ENCODE measurements at regions of chr10 and their contacts with region 1.

Region 1: DNA sequence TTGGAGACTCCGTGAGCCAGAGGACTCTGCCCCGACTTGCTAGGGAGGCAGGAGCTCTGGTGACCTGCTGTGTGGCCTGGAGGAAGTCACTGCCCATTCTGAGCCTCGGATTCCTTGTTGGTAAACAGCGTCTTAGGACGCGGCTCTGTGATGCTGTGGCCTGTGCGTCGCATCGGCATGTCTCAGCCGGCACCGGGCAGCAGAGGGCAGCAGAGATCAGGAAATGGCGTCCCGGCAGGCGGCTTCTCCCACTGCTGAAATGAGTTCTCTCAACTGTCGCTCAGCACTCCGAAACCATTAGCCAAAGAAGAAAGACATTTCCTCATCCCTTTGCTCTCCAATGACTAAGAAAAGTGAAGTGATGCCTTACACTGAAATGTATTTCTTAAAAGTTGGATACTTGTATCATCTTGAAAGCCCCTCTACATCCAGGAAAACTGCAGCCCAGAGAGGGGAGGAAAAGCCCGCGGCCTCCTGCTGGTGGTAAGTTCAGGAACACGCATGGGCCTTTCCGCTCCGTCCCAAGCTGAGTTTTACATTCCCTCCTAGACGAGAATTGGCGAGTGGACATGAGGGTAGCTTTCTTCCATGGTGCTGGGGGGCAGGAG is 91.7 kb downstream of the WDR11 start:
- DNase-seq: no peak
- H3K4me3 ChIP-seq: peak overlapping the region in 1 of 4 donors; percentile 15
- H3K27ac ChIP-seq: peak overlapping the region in 1 of 4 donors; percentile 35
- H3K4me1 ChIP-seq: peaks cover 2 to 26% (median 23%) of the 10 kb centered on the region in 4 donors
- H3K27me3 ChIP-seq: peaks cover 0 to 6% (median 0%) of the 10 kb centered on the region in 4 donors
- CTCF ChIP-seq: peak; percentile 85 to 90 (median 90)
- EP300 ChIP-seq: no peak
- POLR2A ChIP-seq: no peak

Region 2: DNA sequence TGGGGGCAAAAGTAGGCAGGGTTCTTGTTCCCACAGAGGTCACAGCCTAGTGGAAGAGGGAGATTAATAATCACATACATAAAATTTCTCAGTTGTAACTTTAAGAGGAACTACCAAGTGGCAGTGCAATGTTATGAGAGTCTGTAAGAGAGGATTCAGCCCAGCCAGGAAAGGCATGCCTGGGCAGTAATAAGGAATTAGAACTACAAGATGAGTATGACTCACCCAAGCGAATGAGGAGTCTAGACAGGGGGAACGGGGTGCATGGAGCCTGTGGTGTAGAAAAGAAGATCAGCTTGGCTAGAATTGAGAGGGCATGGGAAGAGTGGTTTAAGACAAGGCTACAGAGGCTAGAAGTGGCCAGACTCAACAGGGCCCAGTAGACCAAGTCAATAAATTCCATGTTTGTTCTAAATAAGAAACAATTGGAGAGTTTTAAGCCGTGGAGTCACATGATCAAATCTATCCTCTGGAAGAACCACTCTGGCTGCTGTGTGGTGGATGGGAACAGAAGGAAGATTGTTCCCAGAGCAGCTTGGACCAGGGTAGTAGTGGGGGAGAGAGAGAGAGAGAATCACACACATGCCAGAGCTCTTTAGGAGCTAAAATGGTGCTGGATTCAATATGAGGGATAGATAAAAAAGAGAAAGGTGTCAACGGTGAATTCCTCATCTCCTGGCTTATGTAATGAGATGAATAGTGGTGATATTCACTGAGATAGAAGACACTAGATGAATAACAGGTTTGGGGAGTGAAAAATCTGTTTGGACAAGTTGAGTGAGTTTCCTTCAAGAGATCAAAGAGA is 390.1 kb after region 1 on chr10:
- intact Hi-C with region 1: no loop called
- DNase-seq: peak; percentile 42
- H3K4me3 ChIP-seq: no peak overlapping the region
- H3K27ac ChIP-seq: no peak overlapping the region
- H3K4me1 ChIP-seq: no peaks in the 10 kb centered on the region
- H3K27me3 ChIP-seq: no peaks in the 10 kb centered on the region
- CTCF ChIP-seq: no peak
- EP300 ChIP-seq: no peak
- POLR2A ChIP-seq: no peak

Region 3: DNA sequence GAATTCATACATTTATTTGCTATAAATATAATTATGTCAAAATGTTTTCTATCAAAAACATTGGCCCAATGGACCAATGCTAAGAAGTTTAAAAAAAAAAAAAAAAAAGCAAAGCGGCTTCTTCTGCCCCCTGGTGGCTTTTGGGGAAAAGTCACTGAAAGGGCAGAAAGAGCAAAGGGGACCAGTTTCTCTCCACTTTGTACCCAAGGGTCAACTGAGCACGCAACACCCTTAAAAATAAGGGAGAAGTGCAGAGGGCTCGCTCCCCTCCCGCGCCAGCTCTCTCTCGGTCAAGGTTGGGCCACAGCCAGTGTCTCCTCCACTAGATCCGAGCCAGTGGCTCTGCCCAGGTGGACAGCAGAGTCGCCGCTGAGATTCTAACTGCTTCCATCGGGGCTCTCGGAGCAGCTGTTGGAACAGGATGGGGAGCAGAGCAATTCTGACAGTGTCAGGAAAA is 791.7 kb after region 1 on chr10:
- intact Hi-C with region 1: loop called (anchors 2 kb)
- DNase-seq: no peak
- H3K4me3 ChIP-seq: no peak overlapping the region
- H3K27ac ChIP-seq: no peak overlapping the region
- H3K4me1 ChIP-seq: peaks cover 0 to 6% (median 4%) of the 10 kb centered on the region in 4 donors
- H3K27me3 ChIP-seq: peaks cover 0 to 4% (median 0%) of the 10 kb centered on the region in 4 donors
- CTCF ChIP-seq: peak; percentile 52 to 80 (median 71)
- EP300 ChIP-seq: no peak
- POLR2A ChIP-seq: no peak

Region 4: GRCh38 chr10:121886997-121887622 is 944.2 kb after region 1 on chr10:
- intact Hi-C with region 1: loop called (anchors 5 kb)
- DNase-seq: no peak
- H3K4me3 ChIP-seq: no peak overlapping the region
- H3K27ac ChIP-seq: no peak overlapping the region
- H3K4me1 ChIP-seq: peaks cover 0 to 3% (median 0%) of the 10 kb centered on the region in 4 donors
- H3K27me3 ChIP-seq: no peaks in the 10 kb centered on the region
- CTCF ChIP-seq: peak; percentile 77 to 87 (median 85)
- EP300 ChIP-seq: no peak
- POLR2A ChIP-seq: no peak

Region 5: GRCh38 chr10:121900443-121901174 is 957.7 kb after region 1 on chr10:
- intact Hi-C with region 1: loop called (anchors 5 kb)
- DNase-seq: no peak
- H3K4me3 ChIP-seq: no peak overlapping the region
- H3K27ac ChIP-seq: no peak overlapping the region
- H3K4me1 ChIP-seq: peaks cover 0 to 8% (median 3%) of the 10 kb centered on the region in 4 donors
- H3K27me3 ChIP-seq: no peaks in the 10 kb centered on the region
- CTCF ChIP-seq: peak; percentile 57 to 71 (median 66)
- EP300 ChIP-seq: no peak
- POLR2A ChIP-seq: no peak

Measured in esophagus muscularis mucosa (tissue), 4 donors.